ENCODE measurements at regions of chr5 and their contacts with region 1.

Region 1: GRCh38 chr5:14581333-14581890 is at the start of gene OTULINL:
- DNase-seq: peak; percentile 93
- ATAC-seq: peak; percentile 94
- H3K4me3 Mint-ChIP-seq: peak within 1 kb of the TSS; percentile 77
- H3K27ac Mint-ChIP-seq: peak within 1 kb of the TSS; percentile 60
- H3K4me1 Mint-ChIP-seq: peaks cover 30% of the 10 kb centered on the region
- H3K27me3 Mint-ChIP-seq: peaks cover 8% of the 10 kb centered on the region
- total RNA-seq, gene OTULINL: 9.4 to 10.9 TPM

Region 2: DNA sequence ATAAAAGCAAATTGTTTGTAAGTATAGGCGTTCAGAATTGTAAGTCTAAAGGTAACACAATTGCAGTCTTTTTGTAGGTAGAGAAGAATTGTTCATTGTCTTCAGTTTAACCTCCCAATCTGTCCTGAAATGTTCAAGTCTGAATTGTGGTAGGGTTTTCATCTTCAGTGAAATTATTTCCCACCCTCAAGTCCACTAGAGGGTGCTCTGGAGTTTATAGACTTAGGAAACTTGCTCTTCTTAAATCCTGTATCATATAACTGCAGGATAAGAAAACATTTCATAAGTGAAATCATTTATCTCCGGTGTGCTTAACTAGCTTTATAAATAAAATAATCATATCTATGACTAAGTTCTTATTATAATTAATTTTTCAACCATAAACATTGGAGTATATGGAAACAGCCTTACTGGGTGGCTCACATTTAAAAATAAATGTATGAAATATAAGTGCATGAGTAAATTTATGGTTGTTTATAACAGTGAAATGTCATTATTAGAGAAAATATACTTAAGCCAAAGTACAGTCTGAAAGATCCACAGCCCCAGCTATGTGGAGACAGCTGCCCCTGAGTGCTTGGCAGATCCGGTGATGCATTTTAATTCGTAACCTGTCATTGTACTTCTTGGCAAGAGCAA is 182.2 kb before region 1 on chr5:
- CTCF ChIA-PET with region 1: interaction called, 7 read pairs
- POLR2A ChIA-PET with region 1: no interaction called
- intact Hi-C with region 1: loop called in 1 of 2 experiments (anchors 1 kb)
- DNase-seq: peak; percentile 30
- ATAC-seq: no peak
- H3K4me3 Mint-ChIP-seq: no peak overlapping the region
- H3K27ac Mint-ChIP-seq: no peak overlapping the region
- H3K4me1 Mint-ChIP-seq: peaks cover 13% of the 10 kb centered on the region
- H3K27me3 Mint-ChIP-seq: no peaks in the 10 kb centered on the region

Region 3: GRCh38 chr5:14415024-14415697 is 166.3 kb before region 1 on chr5:
- CTCF ChIA-PET with region 1: interaction called, 4 read pairs
- POLR2A ChIA-PET with region 1: no interaction called
- intact Hi-C with region 1: loop called (anchors 1 to 5 kb)
- DNase-seq: peak; percentile 63
- ATAC-seq: peak; percentile 48
- H3K4me3 Mint-ChIP-seq: peak overlapping the region; percentile 44
- H3K27ac Mint-ChIP-seq: peak overlapping the region; percentile 92
- H3K4me1 Mint-ChIP-seq: peaks cover 53% of the 10 kb centered on the region
- H3K27me3 Mint-ChIP-seq: peaks cover 4% of the 10 kb centered on the region

Region 4: DNA sequence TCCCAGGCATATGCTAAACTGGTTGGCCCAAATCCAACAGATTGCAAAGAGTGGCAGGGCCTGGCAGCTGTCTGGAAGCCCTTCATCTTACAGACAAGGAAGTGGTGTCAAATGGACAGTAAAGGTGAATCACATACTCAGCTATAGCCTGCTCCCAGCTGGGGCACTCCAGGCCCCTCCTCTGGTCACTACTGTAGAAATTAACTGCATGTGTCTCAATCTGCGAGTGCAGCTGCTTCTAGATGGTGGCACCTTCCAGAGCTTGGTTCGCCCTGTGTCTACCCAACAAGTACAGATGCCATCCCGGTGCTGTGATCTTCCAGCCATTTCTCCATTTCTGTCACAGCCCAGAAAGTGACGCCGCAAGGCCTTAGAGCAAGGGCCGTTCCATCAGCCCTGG is 133.3 kb after region 1 on chr5:
- CTCF ChIA-PET with region 1: no interaction called
- POLR2A ChIA-PET with region 1: no interaction called
- intact Hi-C with region 1: no loop called
- DNase-seq: no peak
- ATAC-seq: no peak
- H3K4me3 Mint-ChIP-seq: no peak overlapping the region
- H3K27ac Mint-ChIP-seq: no peak overlapping the region
- H3K4me1 Mint-ChIP-seq: peaks cover 17% of the 10 kb centered on the region
- H3K27me3 Mint-ChIP-seq: no peaks in the 10 kb centered on the region

Region 5: GRCh38 chr5:14996997-14997396 is 415.6 kb after region 1 on chr5:
- CTCF ChIA-PET with region 1: no interaction called
- POLR2A ChIA-PET with region 1: no interaction called
- intact Hi-C with region 1: loop called in 1 of 2 experiments (anchors 5 kb)
- DNase-seq: no peak
- ATAC-seq: no peak
- H3K4me3 Mint-ChIP-seq: no peak overlapping the region
- H3K27ac Mint-ChIP-seq: no peak overlapping the region
- H3K4me1 Mint-ChIP-seq: peaks cover 20% of the 10 kb centered on the region
- H3K27me3 Mint-ChIP-seq: no peaks in the 10 kb centered on the region